ENCODE measurements at regions of chrX and their contacts with region 1.

Region 1: GRCh38 chrX:86747091-86747490 is 598.8 kb downstream of the DACH2 start:
- DNase-seq: no peak
- ATAC-seq: no peak
- H3K4me3 ChIP-seq: no peak overlapping the region
- H3K27ac ChIP-seq: no peak overlapping the region
- H3K4me1 ChIP-seq: no peaks in the 10 kb centered on the region
- H3K27me3 ChIP-seq: no peaks in the 10 kb centered on the region
- CTCF ChIP-seq: no peak

Region 2: GRCh38 chrX:86724277-86724676 is 22.8 kb before region 1 on chrX:
- CTCF ChIA-PET with region 1: no interaction called
- POLR2A ChIA-PET with region 1: no interaction called
- in situ Hi-C with region 1: no loop called
- intact Hi-C with region 1: no loop called
- DNase-seq: no peak
- ATAC-seq: no peak
- H3K4me3 ChIP-seq: no peak overlapping the region
- H3K27ac ChIP-seq: no peak overlapping the region
- H3K4me1 ChIP-seq: no peaks in the 10 kb centered on the region
- H3K27me3 ChIP-seq: no peaks in the 10 kb centered on the region
- CTCF ChIP-seq: no peak

Region 3: GRCh38 chrX:86910602-86911311 is 163.7 kb after region 1 on chrX:
- CTCF ChIA-PET with region 1: no interaction called
- POLR2A ChIA-PET with region 1: no interaction called
- in situ Hi-C with region 1: no loop called
- intact Hi-C with region 1: loop called (anchors 10 kb)
- DNase-seq: no peak
- ATAC-seq: no peak
- H3K4me3 ChIP-seq: no peak overlapping the region
- H3K27ac ChIP-seq: no peak overlapping the region
- H3K4me1 ChIP-seq: no peaks in the 10 kb centered on the region
- H3K27me3 ChIP-seq: no peaks in the 10 kb centered on the region
- CTCF ChIP-seq: no peak

Measured in Panc1 (cell line).